K562 (cell line): ENCODE measurements at regions of chr12 and their contacts with region 1.

Region 1: GRCh38 chr12:60106214-60106613 is 510.4 kb downstream of the SLC16A7 start:
- DNase-seq: peak in 1 of 4 experiments; percentile 13
- ATAC-seq: peak; percentile 83
- H3K4me3 ChIP-seq: no peak overlapping the region
- H3K27ac ChIP-seq: no peak overlapping the region
- H3K4me1 ChIP-seq: no peaks in the 10 kb centered on the region
- H3K27me3 ChIP-seq: no peaks in the 10 kb centered on the region
- CTCF ChIP-seq: peak in 2 of 3 experiments; percentile 5 to 58; a peak in 3 of 6 replicates
- EP300 ChIP-seq: no peak
- POLR2A ChIP-seq: no peak
- RAD21 ChIP-seq: peak; percentile 62 to 72

Region 2: DNA sequence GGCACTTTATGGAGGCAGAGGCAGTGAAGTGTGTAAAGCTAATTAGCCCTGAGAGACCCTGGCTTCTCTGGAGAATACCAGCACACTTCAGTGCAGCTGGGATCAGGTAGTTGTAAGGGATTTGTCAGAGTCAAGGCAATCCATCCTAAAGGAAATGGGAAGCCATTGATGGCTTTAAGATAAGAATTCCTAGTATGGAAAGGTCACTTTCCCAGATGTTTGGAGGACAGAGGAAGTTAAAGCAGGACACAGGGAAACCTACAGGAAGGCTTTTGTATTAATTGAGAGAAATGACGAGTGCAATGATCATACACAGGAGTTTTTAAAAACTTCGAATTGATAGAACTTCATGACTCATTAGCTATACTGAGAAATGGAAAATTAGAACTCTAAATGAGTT is 255.9 kb before region 1 on chr12:
- CTCF ChIA-PET with region 1: no interaction called
- POLR2A ChIA-PET with region 1: no interaction called
- in situ Hi-C with region 1: no loop called
- intact Hi-C with region 1: no loop called
- DNase-seq: no peak
- ATAC-seq: no peak
- H3K4me3 ChIP-seq: no peak overlapping the region
- H3K27ac ChIP-seq: no peak overlapping the region
- H3K4me1 ChIP-seq: no peaks in the 10 kb centered on the region
- H3K27me3 ChIP-seq: no peaks in the 10 kb centered on the region
- CTCF ChIP-seq: no peak
- EP300 ChIP-seq: no peak
- POLR2A ChIP-seq: no peak
- RAD21 ChIP-seq: no peak

Region 3: DNA sequence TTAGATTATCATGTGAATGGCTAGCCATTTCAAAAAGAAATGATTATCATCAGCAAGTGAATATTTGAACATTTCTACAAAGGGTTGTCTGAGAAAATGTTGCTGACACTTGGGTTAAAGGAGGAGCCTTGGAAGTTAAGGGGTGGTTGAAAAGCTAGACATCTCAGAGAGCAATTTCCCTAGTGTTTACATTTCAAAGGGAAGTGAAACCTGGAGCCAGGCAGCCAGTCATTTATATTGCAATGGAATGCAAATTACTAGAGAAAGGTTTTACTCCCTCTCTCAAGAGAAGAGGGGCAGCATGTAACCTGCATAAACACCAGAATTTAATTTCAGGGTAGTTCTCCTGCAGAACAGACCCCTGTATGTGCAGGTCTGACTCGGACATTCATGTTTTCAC is 231.4 kb before region 1 on chr12:
- CTCF ChIA-PET with region 1: no interaction called
- POLR2A ChIA-PET with region 1: no interaction called
- in situ Hi-C with region 1: no loop called
- intact Hi-C with region 1: no loop called
- DNase-seq: no peak
- ATAC-seq: no peak
- H3K4me3 ChIP-seq: no peak overlapping the region
- H3K27ac ChIP-seq: no peak overlapping the region
- H3K4me1 ChIP-seq: no peaks in the 10 kb centered on the region
- H3K27me3 ChIP-seq: no peaks in the 10 kb centered on the region
- CTCF ChIP-seq: no peak
- EP300 ChIP-seq: no peak
- POLR2A ChIP-seq: no peak
- RAD21 ChIP-seq: no peak

Region 4: GRCh38 chr12:60043236-60043635 is 63.0 kb before region 1 on chr12:
- CTCF ChIA-PET with region 1: no interaction called
- POLR2A ChIA-PET with region 1: no interaction called
- in situ Hi-C with region 1: no loop called
- intact Hi-C with region 1: no loop called
- DNase-seq: no peak
- ATAC-seq: no peak
- H3K4me3 ChIP-seq: no peak overlapping the region
- H3K27ac ChIP-seq: no peak overlapping the region
- H3K4me1 ChIP-seq: no peaks in the 10 kb centered on the region
- H3K27me3 ChIP-seq: no peaks in the 10 kb centered on the region
- CTCF ChIP-seq: no peak
- EP300 ChIP-seq: no peak
- POLR2A ChIP-seq: no peak
- RAD21 ChIP-seq: no peak

Region 5: DNA sequence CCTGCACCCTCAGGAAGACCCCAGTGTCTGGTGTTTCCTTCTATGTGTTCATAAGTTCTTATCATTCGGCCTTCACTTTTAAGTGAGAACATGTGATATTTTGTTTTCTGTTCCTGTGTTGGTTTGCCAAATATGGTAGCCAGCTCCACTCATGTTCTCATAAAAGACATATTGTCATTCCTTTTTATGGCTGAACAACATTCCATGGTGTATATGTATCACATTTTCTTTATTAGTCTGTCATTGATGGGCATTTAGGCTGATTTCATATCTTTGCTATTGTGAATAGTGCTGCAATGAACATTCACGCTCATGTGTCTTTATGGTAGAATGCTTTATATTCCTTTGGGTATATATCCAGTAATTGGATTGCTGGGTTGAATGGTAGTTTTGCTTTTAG is 134.7 kb after region 1 on chr12:
- CTCF ChIA-PET with region 1: no interaction called
- POLR2A ChIA-PET with region 1: no interaction called
- in situ Hi-C with region 1: no loop called
- intact Hi-C with region 1: no loop called
- DNase-seq: no peak
- ATAC-seq: no peak; the same call in 2 of the 3 replicates
- H3K4me3 ChIP-seq: no peak overlapping the region
- H3K27ac ChIP-seq: no peak overlapping the region
- H3K4me1 ChIP-seq: no peaks in the 10 kb centered on the region; a peak in 1 of 5 replicates
- H3K27me3 ChIP-seq: no peaks in the 10 kb centered on the region
- CTCF ChIP-seq: no peak
- EP300 ChIP-seq: no peak
- POLR2A ChIP-seq: no peak
- RAD21 ChIP-seq: no peak

Region 6: GRCh38 chr12:60257063-60257462 is 150.8 kb after region 1 on chr12:
- CTCF ChIA-PET with region 1: no interaction called
- POLR2A ChIA-PET with region 1: no interaction called
- in situ Hi-C with region 1: no loop called
- intact Hi-C with region 1: loop called (anchors 5 kb)
- DNase-seq: peak in 2 of 4 experiments; percentile 11 to 18
- ATAC-seq: peak; percentile 88
- H3K4me3 ChIP-seq: no peak overlapping the region
- H3K27ac ChIP-seq: no peak overlapping the region
- H3K4me1 ChIP-seq: 0 out of 5 replicates have a peak, but pooled peaks cover 0 to 2% of the 10 kb centered on the region in 2 experiments
- H3K27me3 ChIP-seq: no peaks in the 10 kb centered on the region
- CTCF ChIP-seq: 0 out of 6 replicates have a peak, but pooled peaks of 2 of the 3 experiments have one; percentile 17 to 21
- EP300 ChIP-seq: no peak
- POLR2A ChIP-seq: no peak
- RAD21 ChIP-seq: no peak

Region 7: DNA sequence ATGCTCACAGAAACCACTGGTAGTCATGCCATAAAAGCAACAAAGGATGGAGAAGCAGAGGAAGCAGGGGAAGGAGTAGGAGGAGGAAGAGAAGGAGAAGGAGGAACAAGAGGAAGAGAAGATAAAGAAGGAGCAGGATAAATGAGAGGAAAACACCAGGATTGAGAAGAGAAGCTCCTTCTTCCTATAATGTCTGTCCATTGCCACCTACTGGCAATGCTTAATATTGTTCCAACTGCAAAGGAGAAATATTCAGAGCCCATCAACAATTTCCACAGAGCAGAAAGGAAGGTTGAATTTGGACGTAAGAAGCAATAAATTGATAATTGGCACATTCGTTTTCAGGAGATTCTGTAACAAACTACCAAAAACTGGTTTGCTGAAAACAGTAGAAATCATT is 388.0 kb after region 1 on chr12:
- CTCF ChIA-PET with region 1: no interaction called
- POLR2A ChIA-PET with region 1: no interaction called
- in situ Hi-C with region 1: no loop called
- intact Hi-C with region 1: loop called (anchors 1 kb)
- DNase-seq: peak in 3 of 4 experiments; percentile 3 to 7 (median 4)
- ATAC-seq: no peak
- H3K4me3 ChIP-seq: no peak overlapping the region
- H3K27ac ChIP-seq: no peak overlapping the region
- H3K4me1 ChIP-seq: no peaks in the 10 kb centered on the region
- H3K27me3 ChIP-seq: no peaks in the 10 kb centered on the region
- CTCF ChIP-seq: peak in 2 of 3 experiments; percentile 33 to 39; a peak in 2 of 6 replicates
- EP300 ChIP-seq: no peak
- POLR2A ChIP-seq: no peak
- RAD21 ChIP-seq: peak in 1 of 2 experiments; percentile 43; a peak in 3 of 4 replicates